Transverse colon (tissue), 4 donors: ENCODE measurements at regions of chr6 and their contacts with region 1.

Region 1: GRCh38 chr6:36027501-36028087 is at the start of gene MAPK14:
- DNase-seq: peak; percentile 99
- H3K4me3 ChIP-seq: peak within 1 kb of the TSS; percentile 85 to 100 (median 96)
- H3K27ac ChIP-seq: peak within 1 kb of the TSS; percentile 98 to 100 (median 98)
- H3K4me1 ChIP-seq: peaks cover 15 to 34% (median 27%) of the 10 kb centered on the region in 4 donors
- H3K27me3 ChIP-seq: peaks cover 9% of the 10 kb centered on the region
- CTCF ChIP-seq: peak; percentile 84 to 99 (median 89)
- EP300 ChIP-seq: no peak
- POLR2A ChIP-seq: peak; percentile 97
- total RNA-seq, gene MAPK14: 82.2 to 132 (median 112) TPM

Region 2: DNA sequence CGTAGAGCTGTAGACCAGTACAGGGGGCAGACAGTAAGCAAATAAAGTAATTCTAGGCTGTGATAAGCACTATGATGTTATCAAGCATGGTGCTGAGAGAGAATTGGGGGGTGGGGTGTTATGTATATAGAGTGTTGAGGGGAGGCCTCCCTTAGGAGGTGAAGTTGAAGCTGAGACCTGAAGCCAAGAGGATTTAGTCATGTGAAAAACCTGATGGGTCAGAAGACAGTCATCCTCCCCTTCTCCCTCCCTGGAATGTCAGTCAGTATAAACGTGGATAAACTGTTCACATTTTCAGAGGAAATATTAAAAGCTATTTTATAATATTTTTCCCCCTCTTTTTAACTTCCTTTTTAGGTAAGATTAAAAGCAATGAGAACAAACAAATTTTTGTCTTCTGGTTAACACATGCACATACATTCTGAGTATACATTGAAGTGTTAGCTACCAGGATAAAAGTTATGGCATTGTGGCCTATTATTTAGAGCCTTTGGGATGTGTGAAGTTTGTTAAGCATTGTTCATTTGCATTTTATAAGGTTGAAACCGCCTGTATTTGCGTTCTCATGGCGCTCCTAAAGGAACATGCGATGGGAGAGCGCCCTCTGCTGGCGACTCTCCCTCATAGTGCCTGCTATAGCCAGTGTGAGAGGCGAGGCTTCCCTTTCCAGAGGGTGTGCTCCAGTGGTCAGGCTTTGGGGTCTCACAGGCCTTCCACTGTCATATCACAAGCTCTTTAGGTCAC is 67.3 kb after region 1 on chr6:
- in situ Hi-C with region 1: loop called in 3 of 4 experiments (anchors 5 to 10 kb)
- intact Hi-C with region 1: loop called (anchors 1 kb)
- DNase-seq: peak; percentile 91
- H3K4me3 ChIP-seq: peak overlapping the region in 1 of 4 donors; percentile 18
- H3K27ac ChIP-seq: peak overlapping the region; percentile 69 to 84 (median 82)
- H3K4me1 ChIP-seq: peaks cover 0 to 27% (median 24%) of the 10 kb centered on the region in 4 donors
- H3K27me3 ChIP-seq: no peaks in the 10 kb centered on the region
- CTCF ChIP-seq: peak; percentile 94 to 98 (median 96)
- EP300 ChIP-seq: no peak
- POLR2A ChIP-seq: no peak

Region 3: GRCh38 chr6:36204068-36204753 is 176.6 kb after region 1 on chr6:
- in situ Hi-C with region 1: loop called in 1 of 4 experiments (anchors 5 kb)
- intact Hi-C with region 1: no loop called
- DNase-seq: no peak
- H3K4me3 ChIP-seq: no peak overlapping the region
- H3K27ac ChIP-seq: no peak overlapping the region
- H3K4me1 ChIP-seq: peaks cover 3 to 67% (median 12%) of the 10 kb centered on the region in 4 donors
- H3K27me3 ChIP-seq: no peaks in the 10 kb centered on the region
- CTCF ChIP-seq: no peak
- EP300 ChIP-seq: no peak
- POLR2A ChIP-seq: no peak

Region 4: GRCh38 chr6:36350681-36351571 is 323.3 kb after region 1 on chr6:
- in situ Hi-C with region 1: loop called in 3 of 4 experiments (anchors 10 to 25 kb)
- intact Hi-C with region 1: no loop called
- DNase-seq: no peak
- H3K4me3 ChIP-seq: no peak overlapping the region
- H3K27ac ChIP-seq: no peak overlapping the region
- H3K4me1 ChIP-seq: no peaks in the 10 kb centered on the region
- H3K27me3 ChIP-seq: no peaks in the 10 kb centered on the region
- CTCF ChIP-seq: no peak
- EP300 ChIP-seq: no peak
- POLR2A ChIP-seq: no peak

Region 5: DNA sequence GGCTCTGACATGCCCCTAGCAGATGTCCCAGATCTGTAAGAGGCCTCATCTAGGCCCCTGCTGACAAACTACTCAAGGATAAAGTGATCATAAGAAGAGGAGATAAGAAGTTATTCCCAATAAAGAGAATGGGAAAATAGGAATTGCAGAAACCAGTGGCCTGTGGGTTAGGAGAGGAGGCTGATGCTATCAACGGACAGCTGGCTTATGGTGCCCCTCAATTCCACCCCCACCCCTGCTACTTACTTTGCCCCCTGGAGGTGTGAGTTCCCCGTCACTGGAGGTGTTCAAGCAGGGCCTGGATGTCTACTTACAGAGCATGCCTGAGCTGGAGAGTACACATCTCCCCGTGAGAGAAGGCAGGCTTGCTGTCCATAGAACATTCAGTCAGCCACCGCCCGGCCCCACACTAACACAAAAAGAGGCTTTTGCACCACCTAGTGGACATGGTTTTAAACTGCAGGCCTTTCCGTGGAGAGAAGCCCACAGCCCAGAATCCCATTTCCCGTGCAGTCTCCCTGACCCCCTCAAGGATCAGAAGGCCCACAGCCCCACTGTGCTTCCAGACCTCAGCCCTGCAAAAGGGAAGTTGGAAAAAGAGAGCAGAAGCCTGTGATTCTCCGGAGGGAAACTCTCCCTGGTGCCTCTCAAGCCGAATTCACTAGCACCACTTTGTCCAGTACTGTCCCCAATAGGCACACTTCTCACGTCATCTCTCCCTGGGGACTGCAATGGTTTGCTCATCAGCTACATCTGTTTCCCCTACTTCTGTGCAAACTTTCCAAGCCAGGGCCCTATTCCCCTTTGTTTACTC is 332.9 kb after region 1 on chr6:
- in situ Hi-C with region 1: loop called in 3 of 4 experiments (anchors 10 to 25 kb)
- intact Hi-C with region 1: no loop called
- DNase-seq: peak; percentile 80
- H3K4me3 ChIP-seq: no peak overlapping the region
- H3K27ac ChIP-seq: no peak overlapping the region
- H3K4me1 ChIP-seq: peaks cover 0 to 17% (median 3%) of the 10 kb centered on the region in 4 donors
- H3K27me3 ChIP-seq: no peaks in the 10 kb centered on the region
- CTCF ChIP-seq: peak; percentile 80 to 92 (median 85)
- EP300 ChIP-seq: no peak
- POLR2A ChIP-seq: no peak